Activated B cell treated with CpG ODN at 0.5 μM for 24 hours (primary cell): ENCODE measurements at regions of chr14 and their contacts with region 1.

Region 1: GRCh38 chr14:64232095-64232838 is 61.9 kb downstream of the ESR2 start:
- DNase-seq: no peak
- ATAC-seq: peak; percentile 11
- H3K4me3 Mint-ChIP-seq: peak overlapping the region; percentile 53
- H3K27ac Mint-ChIP-seq: peak overlapping the region; percentile 97
- H3K4me1 Mint-ChIP-seq: peaks cover 61% of the 10 kb centered on the region
- H3K27me3 Mint-ChIP-seq: no peaks in the 10 kb centered on the region
- CTCF ChIP-seq: no peak

Region 2: GRCh38 chr14:63867933-63868921 is 364.0 kb before region 1 on chr14:
- CTCF ChIA-PET with region 1: no interaction called
- POLR2A ChIA-PET with region 1: interaction called, 5 read pairs
- intact Hi-C with region 1: loop called (anchors 5 kb)
- DNase-seq: no peak
- ATAC-seq: peak; percentile 25
- H3K4me3 Mint-ChIP-seq: peak overlapping the region; percentile 50
- H3K27ac Mint-ChIP-seq: peak overlapping the region; percentile 79
- H3K4me1 Mint-ChIP-seq: peaks cover 60% of the 10 kb centered on the region
- H3K27me3 Mint-ChIP-seq: no peaks in the 10 kb centered on the region
- CTCF ChIP-seq: no peak

Region 3: GRCh38 chr14:64196814-64197411 is 35.4 kb before region 1 on chr14:
- CTCF ChIA-PET with region 1: interaction called, 7 read pairs
- POLR2A ChIA-PET with region 1: interaction called, 70 read pairs
- intact Hi-C with region 1: loop called (anchors 1 kb)
- DNase-seq: peak; percentile 46
- ATAC-seq: peak; percentile 81
- H3K4me3 Mint-ChIP-seq: peak overlapping the region; percentile 83
- H3K27ac Mint-ChIP-seq: peak overlapping the region; percentile 87
- H3K4me1 Mint-ChIP-seq: peaks cover 59% of the 10 kb centered on the region
- H3K27me3 Mint-ChIP-seq: no peaks in the 10 kb centered on the region
- CTCF ChIP-seq: no peak

Region 4: DNA sequence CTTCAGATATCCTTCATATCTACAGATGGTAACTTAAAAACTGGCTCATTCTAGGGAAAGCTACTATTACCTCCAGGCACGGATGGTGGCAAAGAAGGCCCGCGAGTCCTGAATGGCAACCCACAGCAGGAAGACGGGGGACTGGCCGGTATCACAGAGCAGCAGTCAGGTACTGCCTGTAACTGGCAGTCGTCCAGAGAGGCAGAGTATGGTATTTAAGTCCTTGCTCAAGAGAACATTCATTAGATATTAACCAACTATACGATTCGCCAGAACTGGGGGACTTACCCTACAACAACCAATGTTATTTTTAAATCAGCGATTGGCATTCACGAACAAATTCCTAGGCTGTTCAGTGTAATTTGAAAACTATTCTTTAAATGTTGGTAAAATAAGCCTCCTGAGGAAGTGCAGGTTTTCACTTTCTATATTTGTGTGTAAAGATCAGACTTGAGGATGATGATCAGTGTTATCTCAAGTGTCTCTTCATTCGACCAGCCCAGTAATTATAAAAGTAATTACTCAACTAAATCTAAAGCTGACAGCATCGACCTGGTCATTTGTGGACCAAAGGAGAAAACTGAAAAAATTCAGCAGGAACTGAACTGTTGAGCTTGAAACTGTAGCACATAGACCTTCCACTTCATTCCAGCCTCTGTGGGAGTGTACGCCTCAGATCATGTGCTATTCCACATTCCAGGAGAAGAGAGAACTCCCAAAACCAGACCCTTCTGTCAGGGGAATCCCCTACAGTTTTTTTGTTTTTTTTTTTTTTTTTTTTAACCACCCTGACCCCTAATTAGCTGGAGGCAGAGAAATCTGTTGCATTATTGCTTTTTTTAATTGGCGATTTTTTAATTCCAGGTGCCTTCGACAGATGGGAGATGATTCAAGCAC is 13.7 kb before region 1 on chr14:
- CTCF ChIA-PET with region 1: interaction called, 5 read pairs
- POLR2A ChIA-PET with region 1: interaction called, 51 read pairs
- intact Hi-C with region 1: loop called (anchors 1 kb)
- DNase-seq: no peak
- ATAC-seq: peak; percentile 19
- H3K4me3 Mint-ChIP-seq: peak overlapping the region; percentile 63
- H3K27ac Mint-ChIP-seq: peak overlapping the region; percentile 78
- H3K4me1 Mint-ChIP-seq: peaks cover 72% of the 10 kb centered on the region
- H3K27me3 Mint-ChIP-seq: no peaks in the 10 kb centered on the region
- CTCF ChIP-seq: no peak